ENCODE measurements at regions of chr16 and their contacts with region 1.

Region 1: GRCh38 chr16:63096857-63097256 is 1060.6 kb upstream of the CDH8 start:
- DNase-seq: no peak
- H3K4me3 ChIP-seq: no peak overlapping the region
- H3K27ac ChIP-seq: no peak overlapping the region
- H3K4me1 ChIP-seq: no peaks in the 10 kb centered on the region
- H3K27me3 ChIP-seq: no peaks in the 10 kb centered on the region
- CTCF ChIP-seq: no peak

Region 2: GRCh38 chr16:63737633-63738032 is 640.8 kb after region 1 on chr16:
- intact Hi-C with region 1: no loop called
- DNase-seq: no peak
- H3K4me3 ChIP-seq: no peak overlapping the region
- H3K27ac ChIP-seq: no peak overlapping the region
- H3K4me1 ChIP-seq: no peaks in the 10 kb centered on the region
- H3K27me3 ChIP-seq: no peaks in the 10 kb centered on the region
- CTCF ChIP-seq: no peak

Region 3: DNA sequence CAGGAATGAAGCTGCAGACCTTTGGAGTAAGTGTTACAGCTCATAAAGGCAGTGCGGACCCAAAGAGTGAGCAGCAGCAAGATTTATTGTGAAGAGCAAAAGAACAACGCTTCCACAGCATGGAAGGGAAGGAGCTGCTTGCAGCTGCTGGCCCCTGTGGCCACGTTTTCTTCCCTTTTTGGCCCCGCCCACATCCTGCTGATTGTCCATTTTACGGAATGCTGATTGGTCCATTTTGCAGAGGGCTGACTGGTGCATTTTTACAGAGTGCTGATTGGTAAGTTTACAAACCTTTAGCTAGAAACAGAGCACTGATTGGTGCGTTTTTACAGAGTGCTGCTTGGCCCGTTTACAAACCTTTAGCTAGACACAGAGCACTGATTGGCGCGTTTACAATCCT is 1183.5 kb after region 1 on chr16:
- intact Hi-C with region 1: loop called (anchors 5 kb)
- DNase-seq: no peak
- H3K4me3 ChIP-seq: no peak overlapping the region
- H3K27ac ChIP-seq: no peak overlapping the region
- H3K4me1 ChIP-seq: no peaks in the 10 kb centered on the region
- H3K27me3 ChIP-seq: no peaks in the 10 kb centered on the region
- CTCF ChIP-seq: no peak